ENCODE measurements at regions of chr1 and their contacts with region 1.

Region 1: DNA sequence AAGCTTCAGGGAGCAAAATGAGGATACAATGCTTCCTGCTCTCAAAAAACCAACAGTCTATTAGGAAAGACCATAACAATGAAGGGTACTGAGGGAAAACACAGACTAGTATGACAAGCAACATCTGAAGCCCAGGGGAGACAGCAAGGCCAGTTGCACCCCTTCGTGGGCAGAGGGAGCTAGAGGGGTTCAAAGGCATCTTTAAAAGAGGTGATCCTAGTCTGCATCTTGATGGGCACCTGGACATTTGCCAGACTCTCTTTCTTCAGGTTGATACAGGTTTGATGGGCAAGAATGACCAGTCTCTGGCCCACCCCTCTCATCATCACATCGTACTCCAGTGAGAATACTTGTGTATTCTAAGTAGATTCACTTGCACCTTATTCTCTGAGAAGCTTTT is 177.7 kb downstream of the VAV3 start:
- DNase-seq: peak; percentile 37
- ATAC-seq: no peak
- H3K4me3 Mint-ChIP-seq: peak overlapping the region; percentile 69
- H3K27ac Mint-ChIP-seq: peak overlapping the region; percentile 90
- H3K4me1 Mint-ChIP-seq: peaks cover 59% of the 10 kb centered on the region
- H3K27me3 Mint-ChIP-seq: no peaks in the 10 kb centered on the region

Region 2: DNA sequence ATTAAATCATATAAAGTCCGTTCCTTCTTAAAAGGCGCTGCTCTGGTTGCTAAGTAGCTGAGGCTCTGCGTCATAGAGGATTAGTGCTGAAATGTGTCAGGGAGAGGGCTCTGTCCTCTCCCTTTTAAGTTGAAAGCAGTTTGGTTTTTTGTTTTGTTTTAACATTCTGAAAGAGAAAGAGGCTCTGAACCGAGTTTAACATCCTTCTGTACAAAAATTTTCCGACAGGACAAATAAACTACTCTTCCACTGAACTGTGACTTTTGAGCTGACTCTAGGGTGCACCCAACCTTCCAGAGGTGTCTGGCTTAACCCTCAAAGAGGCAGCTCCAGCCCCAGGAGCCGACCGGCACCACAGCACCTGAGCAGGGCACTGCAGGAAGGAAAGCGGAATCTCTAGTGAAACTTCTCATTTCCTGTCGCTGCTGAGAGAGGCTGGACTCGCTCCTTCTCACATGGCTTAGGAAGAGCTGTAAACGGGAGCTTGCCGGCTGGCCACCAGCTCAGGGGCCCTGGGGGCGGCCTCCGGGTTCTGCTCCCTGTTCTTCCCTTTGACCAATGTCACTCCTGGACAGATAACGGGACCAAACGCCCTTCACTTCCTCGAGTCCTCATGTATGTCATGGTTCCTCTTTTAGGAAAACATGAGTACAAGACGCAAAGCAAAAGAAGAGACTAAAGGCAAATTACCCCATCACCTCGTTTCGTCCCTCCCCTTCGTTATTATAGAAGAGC is 176.5 kb after region 1 on chr1:
- POLR2A ChIA-PET with region 1: interaction called, 30 read pairs
- DNase-seq: peak; percentile 63
- ATAC-seq: peak; percentile 62
- H3K4me3 Mint-ChIP-seq: peak overlapping the region; percentile 93
- H3K27ac Mint-ChIP-seq: peak overlapping the region; percentile 91
- H3K4me1 Mint-ChIP-seq: peaks cover 22% of the 10 kb centered on the region
- H3K27me3 Mint-ChIP-seq: no peaks in the 10 kb centered on the region